ENCODE measurements at regions of chr15 and their contacts with region 1.

Region 1: DNA sequence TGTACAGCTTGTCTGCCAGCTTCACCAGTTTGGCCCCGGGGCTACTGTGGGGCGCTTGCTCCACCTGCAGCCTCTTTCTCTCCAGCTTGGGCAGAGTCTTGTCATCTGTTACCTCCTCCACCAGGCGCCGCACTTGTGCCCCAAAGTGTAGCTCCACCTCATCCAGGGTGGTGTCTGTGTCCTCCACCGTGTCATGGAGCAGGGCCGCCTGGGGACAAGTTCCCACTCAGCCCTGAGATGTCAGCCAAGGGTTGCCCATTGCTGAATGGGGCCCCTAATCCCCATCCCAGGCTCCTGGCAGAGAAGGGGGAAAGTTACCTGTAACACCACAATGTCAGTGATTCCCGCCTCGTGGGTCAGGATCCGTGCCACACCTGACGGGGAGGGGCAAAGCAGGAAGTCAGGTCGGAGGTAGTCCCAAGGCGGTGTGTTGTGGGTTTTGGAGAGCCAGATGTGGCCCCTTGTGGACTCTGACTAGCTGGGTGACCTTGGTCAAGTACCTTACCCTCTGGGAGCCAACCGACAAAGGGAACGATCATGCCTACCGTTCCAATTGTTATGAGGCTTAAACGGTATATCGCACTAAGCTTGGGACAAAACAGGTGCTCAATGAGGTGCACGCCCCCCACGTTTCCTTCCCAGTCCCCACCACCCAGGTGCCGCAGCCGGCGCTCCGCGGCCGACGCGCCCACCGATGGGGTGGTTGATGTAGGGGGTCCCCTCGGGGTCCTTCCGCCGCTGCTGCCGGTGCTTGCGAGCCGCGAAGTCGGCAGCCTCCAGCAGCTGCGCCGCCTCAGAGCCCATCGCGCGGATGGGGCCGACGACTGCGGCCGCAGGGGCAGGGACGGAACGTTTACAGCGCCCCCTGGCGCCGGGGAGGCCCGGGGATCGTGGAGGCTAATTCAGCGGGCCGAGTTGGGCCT is at the start of gene HDDC3:
- DNase-seq: peak; percentile 69 to 98 (median 94)

Region 2: DNA sequence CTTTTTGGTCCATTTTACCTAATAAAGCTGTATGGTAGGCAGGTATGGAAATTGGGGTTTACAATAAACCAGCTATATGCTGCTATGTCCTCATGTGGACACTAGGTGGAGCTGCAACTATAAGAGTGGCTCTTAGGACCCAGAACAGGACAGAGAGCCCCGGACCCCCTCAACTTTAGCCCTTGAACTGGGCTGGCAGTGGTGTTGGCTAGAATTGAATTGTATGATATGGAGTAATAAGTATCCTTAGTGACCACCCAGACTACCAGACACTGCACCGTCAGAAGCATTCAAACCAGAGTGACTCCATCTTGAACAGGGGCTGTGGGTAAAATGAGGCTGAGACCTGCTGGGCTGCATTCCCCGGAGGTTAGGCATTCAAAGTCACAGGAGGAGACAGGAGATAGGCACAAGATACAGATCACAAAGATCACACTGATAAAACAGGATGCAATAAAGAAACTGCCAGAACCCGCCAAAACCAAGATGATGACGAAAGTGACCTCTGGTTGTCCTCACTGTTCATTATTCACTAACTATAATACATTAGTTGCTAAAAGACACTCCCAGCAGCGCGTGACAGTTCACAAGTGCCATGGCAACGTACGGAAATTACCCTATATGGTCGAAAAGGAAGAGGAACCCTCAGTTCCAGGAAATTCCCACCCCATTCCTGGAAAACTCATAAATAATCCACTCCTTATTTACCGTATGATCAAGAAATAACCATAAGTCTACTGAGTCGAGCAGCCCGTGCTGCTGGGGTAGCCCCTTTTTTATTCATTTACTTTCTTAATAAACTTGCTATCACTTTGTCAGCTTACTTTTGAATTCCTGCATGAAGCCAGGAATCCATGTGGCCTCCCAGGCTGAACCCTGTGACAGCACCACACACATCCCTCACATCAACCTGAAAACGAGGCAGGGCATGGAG is 283.6 kb before region 1 on chr15:
- intact Hi-C with region 1: loop called (anchors 5 kb)
- DNase-seq: peak in 36 of 42 donors; percentile 24 to 90 (median 68)

Region 3: DNA sequence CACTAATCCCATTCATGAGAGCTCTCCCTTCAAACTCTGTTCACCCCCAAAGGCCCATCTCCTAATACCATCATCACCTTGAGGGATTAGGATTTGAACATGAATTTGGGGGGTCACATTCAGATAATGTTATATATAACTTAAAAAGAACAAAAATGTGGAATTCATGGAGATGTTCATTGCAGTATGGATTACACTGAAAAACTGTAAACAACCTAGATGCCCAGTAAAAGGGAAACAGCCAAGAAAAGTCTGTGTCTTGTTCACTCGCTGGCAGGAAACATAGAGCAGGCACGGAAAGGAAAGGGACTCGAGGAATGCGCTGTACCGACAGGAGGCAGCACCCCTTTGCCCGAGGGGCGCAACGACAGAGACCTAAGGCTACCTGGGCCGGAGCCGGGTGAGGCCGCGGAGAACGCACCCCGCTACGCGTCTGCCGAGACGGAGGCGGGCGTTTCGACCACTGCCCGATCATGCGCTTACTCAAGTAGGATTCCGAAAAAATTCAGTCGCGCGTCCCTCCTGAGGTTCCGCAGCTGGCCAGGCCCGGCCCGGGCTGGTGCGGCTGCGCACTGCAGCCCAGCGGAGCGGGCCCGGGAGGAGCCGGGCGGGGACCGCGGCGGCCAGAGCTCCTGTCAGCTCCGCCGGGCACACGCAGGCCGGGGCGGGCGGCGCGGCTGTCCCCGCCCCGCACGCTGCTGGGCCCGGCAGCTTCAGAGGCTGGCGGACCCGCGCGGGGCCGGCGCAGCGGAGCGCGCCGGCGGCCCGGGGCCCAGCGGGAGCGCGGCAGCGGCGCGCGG is 29.8 kb before region 1 on chr15:
- intact Hi-C with region 1: loop called (anchors 2 kb)
- DNase-seq: peak; percentile 66 to 91 (median 82)